Kidney (tissue), 22 donors: ENCODE measurements at regions of chr14 and their contacts with region 1.

Region 1: GRCh38 chr14:23929822-23930294 is 23.7 kb upstream of the DHRS4 start:
- DNase-seq: peak in 4 of 5 donors; percentile 60 to 84 (median 78)
- H3K4me3 ChIP-seq: no peak overlapping the region
- H3K27ac ChIP-seq: no peak overlapping the region
- H3K4me1 ChIP-seq: peaks cover 9 to 28% (median 10%) of the 10 kb centered on the region in 3 donors
- H3K27me3 ChIP-seq: no peaks in the 10 kb centered on the region
- CTCF ChIP-seq: peak; percentile 92

Region 2: GRCh38 chr14:23631702-23632460 is 298.0 kb before region 1 on chr14:
- intact Hi-C with region 1: loop called (anchors 10 kb)
- DNase-seq: peak; percentile 85 to 98 (median 92)
- H3K4me3 ChIP-seq: peak overlapping the region in 2 of 3 donors; percentile 42 to 51
- H3K27ac ChIP-seq: peak overlapping the region in 1 of 2 donors; percentile 42
- H3K4me1 ChIP-seq: peaks cover 0 to 9% (median 0%) of the 10 kb centered on the region in 3 donors
- H3K27me3 ChIP-seq: no peaks in the 10 kb centered on the region
- CTCF ChIP-seq: peak; percentile 96